ENCODE measurements at regions of chr10 and their contacts with region 1.

Region 1: DNA sequence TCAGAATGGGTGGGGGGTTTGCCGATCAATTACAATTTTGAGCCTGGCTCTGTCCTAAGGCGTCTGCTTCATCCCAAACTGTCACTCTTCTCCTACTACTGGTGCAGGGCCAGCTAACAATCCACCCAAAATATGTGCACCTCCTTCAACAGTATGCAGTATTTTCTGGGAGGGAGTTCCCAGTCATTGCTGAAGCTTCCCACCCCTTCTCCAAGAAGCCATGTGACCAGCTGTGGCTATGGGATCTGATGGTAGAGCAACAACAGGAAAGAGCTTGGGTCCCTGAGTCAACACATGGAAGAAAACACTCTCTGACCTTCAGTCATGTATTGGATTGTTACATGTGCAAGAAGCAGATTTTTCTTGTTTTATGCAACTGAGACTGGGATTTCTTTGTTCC is 185.7 kb upstream of the GHITM start:
- DNase-seq: no peak
- ATAC-seq: no peak

Region 2: DNA sequence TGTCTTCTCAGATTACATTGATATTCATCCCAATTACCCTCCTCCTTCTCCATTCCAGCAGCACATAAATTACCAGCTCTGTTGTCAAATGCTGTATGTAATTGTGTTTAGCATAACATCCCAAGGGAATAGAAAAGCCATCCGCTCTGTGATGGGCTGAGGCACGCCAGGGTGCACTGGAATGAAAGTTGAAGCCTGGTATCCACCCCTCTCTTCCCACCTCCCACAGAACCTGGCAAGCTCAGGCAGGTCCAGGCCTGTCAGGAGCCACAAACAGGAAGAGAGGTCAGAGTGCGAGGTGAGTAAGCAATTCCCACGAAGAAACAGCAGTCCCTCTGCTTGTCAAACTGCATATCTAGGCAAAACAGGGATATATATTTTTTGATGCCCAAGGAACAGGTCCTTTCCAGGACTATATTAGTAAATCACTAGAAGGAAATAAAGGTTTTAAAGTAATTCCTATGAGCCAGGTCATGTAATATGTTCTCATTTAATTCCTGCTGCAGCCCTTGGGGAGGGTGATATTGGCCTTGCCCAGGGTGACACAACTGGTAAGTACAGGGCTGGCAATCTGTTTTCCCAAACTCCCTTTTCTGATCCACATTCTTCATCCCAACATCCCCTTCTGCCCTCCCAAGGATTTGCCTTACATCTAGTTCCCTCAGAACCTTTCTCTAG is 30.1 kb after region 1 on chr10:
- intact Hi-C with region 1: loop called (anchors 1 kb)
- DNase-seq: no peak
- ATAC-seq: no peak